Activated CD4-positive, alpha-beta memory T cell treated with anti-CD3 and anti-CD28 coated beads, Interleukin-2, amount 10 ng/mL, durations not matched to agents 7 days and 5 days (primary cell): ENCODE measurements at regions of chr13 and their contacts with region 1.

Region 1: GRCh38 chr13:32315238-32316027 is at the starts of genes BRCA2 and ZAR1L:
- DNase-seq: peak; percentile 92
- H3K4me3 Mint-ChIP-seq: peak within 1 kb of the TSS; percentile 95
- H3K27ac Mint-ChIP-seq: peak within 1 kb of the TSS; percentile 98
- H3K4me1 Mint-ChIP-seq: peaks cover 43% of the 10 kb centered on the region
- H3K27me3 Mint-ChIP-seq: no peaks in the 10 kb centered on the region
- total RNA-seq, gene BRCA2: 18.3 to 23.6 TPM
- total RNA-seq, gene ZAR1L: not detected

Region 2: DNA sequence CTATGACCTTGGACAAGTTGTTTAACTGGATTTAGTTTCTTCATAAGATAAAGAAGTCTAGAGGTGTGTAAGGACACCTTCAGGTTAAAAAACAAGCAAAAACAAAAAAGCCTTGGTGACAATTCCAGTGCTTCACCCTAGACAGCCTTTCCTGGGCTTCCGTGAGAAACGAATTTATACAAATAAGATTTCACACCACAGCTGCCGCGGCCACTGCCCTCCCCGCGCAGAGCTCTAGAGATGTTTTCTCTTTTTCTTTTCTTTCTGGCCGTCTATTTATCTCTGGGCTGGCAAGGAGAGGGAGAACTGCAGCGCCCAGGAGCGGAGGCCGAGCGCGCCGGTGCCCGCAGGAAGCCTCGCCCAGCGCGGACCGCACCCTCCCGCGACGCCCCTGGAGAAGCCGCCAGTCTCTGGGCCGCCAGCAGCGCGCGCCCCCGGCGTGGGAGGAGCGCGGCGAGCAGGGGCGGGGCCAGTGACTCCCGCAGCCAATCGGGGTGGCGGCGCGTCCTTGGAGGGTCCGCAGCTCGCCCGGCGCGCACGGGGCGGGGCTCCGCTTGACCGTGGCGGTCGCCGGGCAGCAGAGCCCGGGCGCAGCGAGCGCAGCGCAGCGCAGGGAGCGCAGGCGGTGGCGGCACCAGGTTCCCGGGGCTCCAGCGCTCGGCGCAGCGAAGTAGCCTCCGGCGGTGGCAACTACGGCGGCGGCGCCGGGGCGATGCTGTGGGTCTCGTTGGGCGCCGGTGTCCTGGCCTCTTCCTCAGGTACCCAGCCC is 469.1 kb before region 1 on chr13:
- CTCF ChIA-PET with region 1: no interaction called
- POLR2A ChIA-PET with region 1: interaction called, 10 read pairs
- DNase-seq: peak; percentile 85
- H3K4me3 Mint-ChIP-seq: peak overlapping the region; percentile 79
- H3K27ac Mint-ChIP-seq: peak overlapping the region; percentile 65
- H3K4me1 Mint-ChIP-seq: peaks cover 38% of the 10 kb centered on the region
- H3K27me3 Mint-ChIP-seq: peaks cover 42% of the 10 kb centered on the region

Region 3: DNA sequence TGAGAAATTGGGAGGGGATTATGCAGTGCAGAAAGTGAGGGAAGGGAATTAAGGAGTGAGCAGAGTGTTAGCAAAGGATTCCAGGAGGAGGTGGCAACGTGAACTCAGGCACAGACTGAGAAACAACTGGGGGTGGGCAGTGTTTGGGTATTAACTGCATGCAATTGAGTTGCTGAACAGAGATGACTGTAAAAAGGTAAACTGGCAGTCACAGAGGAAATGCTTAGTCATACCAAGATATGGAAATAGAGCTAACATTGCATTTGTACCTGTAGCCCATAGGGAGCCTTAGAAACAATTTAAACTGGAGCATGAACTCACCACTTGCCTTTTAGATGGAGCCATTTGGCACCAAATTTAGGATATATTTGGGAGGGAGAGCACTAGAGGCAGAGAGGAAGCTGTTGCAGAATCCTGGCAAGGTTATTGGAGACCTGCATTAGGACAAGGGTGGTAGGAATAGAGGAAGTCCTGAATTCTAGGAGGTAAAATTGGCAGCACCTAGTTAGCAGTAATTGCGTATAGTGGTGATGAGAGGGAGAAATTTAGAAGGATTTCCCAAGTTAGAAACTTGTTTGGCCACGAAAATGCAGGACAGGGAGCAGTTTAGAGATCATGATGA is 384.4 kb before region 1 on chr13:
- CTCF ChIA-PET with region 1: no interaction called
- POLR2A ChIA-PET with region 1: interaction called, 16 read pairs
- DNase-seq: peak; percentile 50
- H3K4me3 Mint-ChIP-seq: no peak overlapping the region
- H3K27ac Mint-ChIP-seq: no peak overlapping the region
- H3K4me1 Mint-ChIP-seq: peaks cover 38% of the 10 kb centered on the region
- H3K27me3 Mint-ChIP-seq: no peaks in the 10 kb centered on the region

Region 4: GRCh38 chr13:32246468-32246867 is 69.0 kb before region 1 on chr13:
- CTCF ChIA-PET with region 1: interaction called, 10 read pairs
- POLR2A ChIA-PET with region 1: interaction called, 6 read pairs
- DNase-seq: peak; percentile 50
- H3K4me3 Mint-ChIP-seq: no peak overlapping the region
- H3K27ac Mint-ChIP-seq: no peak overlapping the region
- H3K4me1 Mint-ChIP-seq: peaks cover 11% of the 10 kb centered on the region
- H3K27me3 Mint-ChIP-seq: no peaks in the 10 kb centered on the region

Region 5: DNA sequence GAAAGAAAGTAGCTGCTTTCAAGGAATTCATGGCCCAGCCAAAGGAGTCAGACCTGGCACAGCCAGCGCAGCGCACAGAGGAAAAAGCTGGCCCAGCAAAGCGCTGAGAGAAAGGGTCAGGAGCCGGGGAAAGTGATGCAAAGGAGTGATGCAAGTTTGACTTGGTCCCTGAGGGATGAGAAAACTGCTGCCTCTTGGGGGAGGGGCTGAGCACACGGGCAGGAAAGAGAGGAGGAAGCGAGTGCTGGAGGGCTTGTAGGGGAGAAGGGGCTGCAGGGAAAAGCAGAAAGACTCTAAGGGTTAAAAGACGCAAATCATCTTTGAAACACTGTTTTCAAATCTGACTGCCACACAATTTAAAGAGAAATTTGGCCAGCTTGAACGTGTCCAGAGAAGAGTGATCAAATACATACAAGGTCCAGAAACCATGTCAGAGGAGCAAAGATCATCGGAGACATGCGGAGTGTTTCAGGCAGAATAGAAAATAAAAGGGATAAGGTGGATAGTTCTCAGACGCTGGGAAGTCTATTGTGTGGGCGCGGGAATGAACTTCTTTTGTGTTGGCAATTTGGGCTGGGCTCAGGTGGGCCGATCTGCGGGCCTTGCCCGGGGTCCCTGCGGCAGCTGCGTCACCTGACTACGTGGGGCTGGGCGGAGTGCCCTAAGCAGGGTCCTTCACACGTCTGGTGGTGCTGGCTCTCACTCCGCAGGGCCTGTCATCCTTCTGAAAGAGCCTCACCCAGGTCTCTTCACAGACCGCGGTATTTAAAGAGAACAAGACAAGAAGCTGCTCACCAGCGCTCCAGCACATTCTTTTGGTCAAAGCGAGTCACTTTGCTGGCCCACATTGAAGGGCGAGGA is 94.4 kb after region 1 on chr13:
- CTCF ChIA-PET with region 1: no interaction called
- POLR2A ChIA-PET with region 1: interaction called, 13 read pairs
- DNase-seq: no peak
- H3K4me3 Mint-ChIP-seq: no peak overlapping the region
- H3K27ac Mint-ChIP-seq: no peak overlapping the region
- H3K4me1 Mint-ChIP-seq: peaks cover 22% of the 10 kb centered on the region
- H3K27me3 Mint-ChIP-seq: no peaks in the 10 kb centered on the region

Region 6: GRCh38 chr13:32538621-32539246 is 223.3 kb after region 1 on chr13 and contains the start of gene N4BP2L2:
- CTCF ChIA-PET with region 1: interaction called, 6 read pairs
- POLR2A ChIA-PET with region 1: interaction called, 36 read pairs
- DNase-seq: peak; percentile 93
- H3K4me3 Mint-ChIP-seq: peak within 1 kb of the TSS; percentile 95
- H3K27ac Mint-ChIP-seq: peak within 1 kb of the TSS; percentile 98
- H3K4me1 Mint-ChIP-seq: peaks cover 42% of the 10 kb centered on the region
- H3K27me3 Mint-ChIP-seq: peaks cover 2% of the 10 kb centered on the region
- total RNA-seq, gene N4BP2L2: 119 to 126 TPM

Region 7: DNA sequence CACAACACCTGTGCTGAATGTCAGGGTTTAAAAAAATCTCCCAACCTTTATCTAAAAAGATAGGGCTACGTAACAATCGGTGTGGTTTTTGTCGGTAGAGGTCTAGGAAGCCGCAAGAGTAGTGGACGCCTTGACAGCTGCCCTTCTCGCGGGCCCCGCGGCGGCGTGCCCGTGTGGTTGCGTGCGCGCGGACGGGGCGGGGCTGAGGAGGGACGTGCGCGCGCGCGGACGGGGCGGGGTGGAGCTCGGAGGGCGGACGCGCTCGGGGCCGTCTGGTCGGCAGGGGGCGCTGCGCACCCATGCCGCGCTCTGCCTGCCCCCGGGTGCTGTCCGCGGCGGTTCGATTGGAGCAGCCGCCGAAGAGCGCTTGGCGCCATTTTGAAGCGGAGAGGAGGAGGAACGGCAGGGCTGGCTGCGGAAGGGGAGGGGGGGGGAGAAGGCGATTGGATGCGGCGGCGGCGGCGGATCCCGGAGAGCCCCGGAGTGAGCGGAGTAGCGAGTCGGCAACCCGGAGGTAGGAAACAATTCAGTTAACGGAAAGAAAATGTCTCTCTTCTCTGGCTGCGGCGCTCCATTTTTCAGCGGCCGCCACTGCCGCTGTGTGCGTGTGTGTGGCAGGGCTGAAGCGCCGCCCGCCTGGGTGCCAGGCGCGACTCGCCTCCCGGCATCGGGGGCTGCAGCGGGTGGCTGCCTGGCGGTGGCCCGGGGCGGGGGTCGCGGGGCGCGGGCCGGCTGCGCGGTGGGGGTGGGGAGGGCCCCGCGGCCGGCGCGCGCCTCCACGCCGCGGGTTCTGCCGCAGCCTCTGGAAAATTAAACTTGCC is 270.9 kb after region 1 on chr13 and contains the start of gene PDS5B:
- CTCF ChIA-PET with region 1: interaction called, 6 read pairs
- POLR2A ChIA-PET with region 1: interaction called, 11 read pairs
- DNase-seq: peak; percentile 95
- H3K4me3 Mint-ChIP-seq: peak within 1 kb of the TSS; percentile 93
- H3K27ac Mint-ChIP-seq: peak within 1 kb of the TSS; percentile 92
- H3K4me1 Mint-ChIP-seq: peaks cover 40% of the 10 kb centered on the region
- H3K27me3 Mint-ChIP-seq: peaks cover 3% of the 10 kb centered on the region
- total RNA-seq, gene PDS5B: 59.5 to 60.6 TPM